Testis (tissue), 5 donors: ENCODE measurements at regions of chr16 and their contacts with region 1.

Region 1: DNA sequence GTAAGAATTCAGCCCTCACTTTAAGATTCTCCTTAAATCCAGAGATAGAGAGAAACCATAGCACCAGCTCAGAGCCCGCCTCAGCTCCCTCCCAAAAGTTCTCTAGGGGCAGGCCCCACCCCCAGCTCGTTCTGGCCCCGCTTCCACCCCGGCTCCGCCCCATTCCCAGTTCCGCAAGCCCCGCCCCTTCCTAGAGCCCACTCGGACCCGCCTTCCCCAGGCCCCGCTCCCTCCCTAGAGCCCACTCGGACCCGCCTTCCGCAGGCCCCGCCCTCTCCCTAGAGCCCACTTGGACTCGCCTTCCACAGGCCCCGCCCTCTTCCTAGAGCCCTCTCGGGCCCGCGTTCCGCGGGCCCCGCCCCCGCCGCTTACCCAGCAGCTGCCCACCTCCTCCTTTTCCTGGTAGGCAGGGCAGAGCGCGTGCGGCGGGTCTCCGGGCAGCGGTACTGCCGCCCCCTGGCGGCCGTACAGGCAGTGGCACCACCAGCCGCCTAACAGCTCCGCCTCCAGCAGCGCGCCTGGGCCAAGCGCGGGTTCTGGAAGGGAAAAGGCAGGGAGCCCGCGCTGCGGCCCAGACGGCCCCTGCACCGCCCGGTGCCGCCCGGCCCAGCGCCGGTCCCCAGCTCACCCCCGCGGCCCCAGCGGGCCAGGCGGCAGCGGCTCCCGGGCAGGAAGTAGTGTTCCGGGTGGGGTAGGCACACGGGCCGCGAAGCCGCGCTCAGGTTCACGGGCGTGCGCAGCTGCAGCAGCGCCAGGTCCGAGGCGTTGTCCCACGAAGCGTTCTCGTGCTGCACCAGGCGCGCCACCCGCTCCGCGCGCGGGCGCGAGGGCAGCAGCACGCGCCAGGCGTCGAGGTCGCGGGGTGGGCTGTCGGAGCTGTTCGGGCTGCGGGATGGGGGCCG is 6.8 kb upstream of the PRSS8 start:
- DNase-seq: peak; percentile 99
- H3K4me3 ChIP-seq: peak overlapping the region; percentile 51 to 52
- H3K27ac ChIP-seq: peak overlapping the region; percentile 35 to 81
- H3K4me1 ChIP-seq: peaks cover 10% of the 10 kb centered on the region
- H3K27me3 ChIP-seq: no peaks in the 10 kb centered on the region
- CTCF ChIP-seq: peak; percentile 97 to 99 (median 99)
- POLR2A ChIP-seq: no peak

Region 2: DNA sequence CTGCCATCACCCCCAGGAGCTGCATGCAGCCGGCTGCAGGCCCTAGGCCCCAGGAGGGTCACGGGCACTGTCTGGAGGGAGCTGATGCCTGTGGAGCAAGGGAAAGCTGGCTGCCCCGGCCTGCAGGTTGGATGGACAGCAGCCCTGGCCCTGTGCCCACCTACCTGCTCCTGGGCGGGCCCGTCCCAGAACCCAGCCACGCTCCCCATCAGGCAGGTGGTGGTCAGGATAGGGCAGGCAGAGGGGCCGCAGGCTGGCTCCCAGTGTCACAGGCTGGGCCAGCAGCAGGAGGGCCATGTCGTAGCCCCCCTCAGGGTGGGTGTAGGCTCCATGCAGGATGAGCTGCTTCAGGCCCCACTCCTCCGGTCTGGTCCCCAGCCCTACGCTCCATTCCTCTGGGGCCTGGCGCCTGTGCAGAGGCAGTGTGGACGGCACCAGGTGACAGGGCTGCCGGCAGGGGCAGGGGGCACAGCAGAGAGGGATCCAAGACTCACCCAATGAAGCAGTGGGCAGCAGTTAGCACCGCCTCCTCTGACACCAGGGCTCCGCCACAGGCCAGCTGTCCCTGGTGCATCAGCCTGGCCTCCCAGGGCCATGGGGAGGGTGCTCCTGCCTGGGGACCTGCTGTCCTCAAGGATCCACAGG is 57.6 kb before region 1 on chr16:
- intact Hi-C with region 1: loop called (anchors 10 kb)
- DNase-seq: peak; percentile 29
- H3K4me3 ChIP-seq: no peak overlapping the region
- H3K27ac ChIP-seq: no peak overlapping the region
- H3K4me1 ChIP-seq: peaks cover 28% of the 10 kb centered on the region
- H3K27me3 ChIP-seq: no peaks in the 10 kb centered on the region
- CTCF ChIP-seq: no peak
- POLR2A ChIP-seq: no peak